Dendritic cell treated with granulocyte-macrophage colony-stimulating factor and Interleukin-4, amounts not matched to agents 40 ng/mL and 50 ng/mL, for 4 days (primary cell): ENCODE measurements at regions of chr11 and their contacts with region 1.

Region 1: GRCh38 chr11:9265211-9266131 is at the start of gene DENND5A:
- H3K4me3 Mint-ChIP-seq: peak within 1 kb of the TSS; percentile 84
- H3K27ac Mint-ChIP-seq: peak within 1 kb of the TSS; percentile 96
- H3K4me1 Mint-ChIP-seq: peaks cover 38% of the 10 kb centered on the region
- H3K27me3 Mint-ChIP-seq: peaks cover 25% of the 10 kb centered on the region

Region 2: DNA sequence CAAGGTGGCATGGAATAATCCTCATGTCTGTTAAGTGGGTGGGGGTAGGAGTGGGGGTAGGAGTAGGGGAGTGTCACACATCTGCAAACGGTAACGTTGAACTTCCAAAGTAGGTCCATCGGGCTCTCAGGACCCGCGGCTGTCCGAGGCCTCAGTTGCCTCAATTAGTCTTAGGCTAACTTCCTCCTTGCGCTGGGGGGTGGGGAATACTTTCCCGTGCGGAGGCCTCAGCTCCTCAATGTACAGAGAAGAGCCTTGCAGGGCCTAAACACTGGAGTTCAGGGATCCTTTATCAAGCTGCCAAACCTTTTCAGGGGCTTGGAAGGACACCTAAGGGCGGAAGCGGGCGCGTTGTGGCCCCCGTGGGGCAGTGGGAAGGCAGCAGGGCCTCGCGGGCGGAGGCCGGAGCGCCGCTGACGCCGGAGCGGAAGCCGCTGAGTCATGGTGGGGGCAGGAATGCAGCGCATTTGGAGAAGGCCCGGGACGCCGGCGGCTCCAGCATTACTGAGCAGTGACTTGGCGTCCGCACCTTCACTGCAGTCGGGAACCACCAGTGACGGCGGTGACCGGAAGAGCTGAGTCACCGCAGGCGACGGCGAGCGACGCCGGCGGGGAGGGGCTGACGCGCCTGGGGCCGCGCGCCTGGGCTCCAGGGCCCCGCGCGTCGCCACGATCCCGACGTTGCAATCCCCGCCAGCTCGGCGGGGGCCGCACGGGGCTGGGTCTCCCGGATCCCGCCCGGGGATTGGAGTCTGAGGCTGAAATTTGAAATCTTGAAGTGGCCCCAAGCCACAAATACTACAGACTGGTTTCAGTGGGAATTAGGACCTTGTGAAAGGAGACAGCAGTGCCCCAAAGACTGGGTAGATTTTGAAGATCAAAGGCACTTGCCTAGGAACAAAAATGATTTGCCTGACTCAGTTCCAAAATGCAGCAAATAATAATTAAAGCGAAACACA is 98.8 kb after region 1 on chr11:
- intact Hi-C with region 1: loop called (anchors 5 kb)
- H3K4me3 Mint-ChIP-seq: peak overlapping the region; percentile 78
- H3K27ac Mint-ChIP-seq: peak overlapping the region; percentile 99
- H3K4me1 Mint-ChIP-seq: peaks cover 26% of the 10 kb centered on the region
- H3K27me3 Mint-ChIP-seq: no peaks in the 10 kb centered on the region

Region 3: GRCh38 chr11:9460322-9461067 is 195.0 kb after region 1 on chr11 and contains the start of gene ZNF143:
- intact Hi-C with region 1: loop called (anchors 5 kb)
- H3K4me3 Mint-ChIP-seq: peak within 1 kb of the TSS; percentile 98
- H3K27ac Mint-ChIP-seq: peak within 1 kb of the TSS; percentile 98
- H3K4me1 Mint-ChIP-seq: peaks cover 12% of the 10 kb centered on the region
- H3K27me3 Mint-ChIP-seq: no peaks in the 10 kb centered on the region